Thyroid gland (tissue), 4 donors: ENCODE measurements at regions of chr17 and their contacts with region 1.

Region 1: GRCh38 chr17:77096570-77097214 is 44.1 kb upstream of the SEC14L1 start:
- DNase-seq: no peak
- H3K4me3 ChIP-seq: no peak overlapping the region
- H3K27ac ChIP-seq: peak overlapping the region; percentile 55 to 78 (median 67)
- H3K4me1 ChIP-seq: peaks cover 27 to 34% of the 10 kb centered on the region in 2 donors
- H3K27me3 ChIP-seq: no peaks in the 10 kb centered on the region
- CTCF ChIP-seq: peak; percentile 42 to 93 (median 76)
- POLR2A ChIP-seq: no peak

Region 2: GRCh38 chr17:77140166-77140878 is 43.6 kb after region 1 on chr17:
- intact Hi-C with region 1: loop called (anchors 5 kb)
- DNase-seq: peak; percentile 99
- H3K4me3 ChIP-seq: peak overlapping the region; percentile 13 to 94 (median 29)
- H3K27ac ChIP-seq: peak overlapping the region; percentile 81 to 96 (median 87)
- H3K4me1 ChIP-seq: peaks cover 17 to 28% of the 10 kb centered on the region in 2 donors
- H3K27me3 ChIP-seq: no peaks in the 10 kb centered on the region
- CTCF ChIP-seq: peak in 2 of 6 experiments; percentile 13 to 14
- POLR2A ChIP-seq: peak; percentile 81 to 97

Region 3: GRCh38 chr17:77214743-77215142 is 118.1 kb after region 1 on chr17:
- intact Hi-C with region 1: loop called (anchors 10 kb)
- DNase-seq: peak; percentile 86 to 87
- H3K4me3 ChIP-seq: no peak overlapping the region
- H3K27ac ChIP-seq: peak overlapping the region; percentile 38 to 70 (median 61)
- H3K4me1 ChIP-seq: peaks cover 50 to 70% of the 10 kb centered on the region in 2 donors
- H3K27me3 ChIP-seq: no peaks in the 10 kb centered on the region
- CTCF ChIP-seq: peak; percentile 20 to 99 (median 82)
- POLR2A ChIP-seq: no peak